Activated CD8-positive, alpha-beta memory T cell treated with anti-CD3 and anti-CD28 coated beads, Interleukin-2, amount 10 ng/mL, durations not matched to agents 7 days and 5 days (primary cell): ENCODE measurements at regions of chr2 and their contacts with region 1.

Region 1: GRCh38 chr2:191811807-191812602 is 34.9 kb downstream of the CAVIN2 start:
- DNase-seq: peak; percentile 47
- ATAC-seq: peak; percentile 47
- H3K4me3 Mint-ChIP-seq: no peak overlapping the region
- H3K27ac Mint-ChIP-seq: no peak overlapping the region
- H3K4me1 Mint-ChIP-seq: no peaks in the 10 kb centered on the region
- H3K27me3 Mint-ChIP-seq: peaks cover 24% of the 10 kb centered on the region

Region 2: DNA sequence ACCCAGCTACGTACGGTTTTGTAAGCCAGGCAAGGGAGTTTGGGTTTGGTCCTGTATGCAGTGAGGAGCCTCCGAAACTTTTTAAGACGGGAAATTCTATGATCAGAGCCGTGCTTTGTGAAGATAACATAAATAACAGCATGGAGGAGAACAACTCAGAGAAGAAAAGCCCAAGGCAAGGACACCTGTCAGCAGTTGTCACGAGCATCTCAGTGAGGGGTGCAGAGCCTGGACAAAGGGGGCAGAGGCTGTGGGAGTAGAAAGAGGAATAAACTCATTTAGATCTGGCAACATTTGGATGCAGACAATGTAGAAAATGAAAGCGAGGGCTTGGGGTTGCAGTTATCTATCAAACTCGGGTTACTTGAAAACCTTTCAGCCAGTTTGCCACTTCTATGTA is 29.7 kb before region 1 on chr2:
- CTCF ChIA-PET with region 1: no interaction called
- DNase-seq: no peak
- ATAC-seq: no peak
- H3K4me3 Mint-ChIP-seq: no peak overlapping the region
- H3K27ac Mint-ChIP-seq: no peak overlapping the region
- H3K4me1 Mint-ChIP-seq: peaks cover 8% of the 10 kb centered on the region
- H3K27me3 Mint-ChIP-seq: peaks cover 17% of the 10 kb centered on the region

Region 3: GRCh38 chr2:191795715-191796114 is 16.3 kb before region 1 on chr2:
- CTCF ChIA-PET with region 1: no interaction called
- DNase-seq: no peak
- ATAC-seq: no peak
- H3K4me3 Mint-ChIP-seq: no peak overlapping the region
- H3K27ac Mint-ChIP-seq: no peak overlapping the region
- H3K4me1 Mint-ChIP-seq: no peaks in the 10 kb centered on the region
- H3K27me3 Mint-ChIP-seq: peaks cover 26% of the 10 kb centered on the region

Region 4: GRCh38 chr2:191831410-191831994 is 19.5 kb after region 1 on chr2:
- CTCF ChIA-PET with region 1: no interaction called
- DNase-seq: no peak
- ATAC-seq: no peak
- H3K4me3 Mint-ChIP-seq: no peak overlapping the region
- H3K27ac Mint-ChIP-seq: no peak overlapping the region
- H3K4me1 Mint-ChIP-seq: no peaks in the 10 kb centered on the region
- H3K27me3 Mint-ChIP-seq: peaks cover 40% of the 10 kb centered on the region

Region 5: DNA sequence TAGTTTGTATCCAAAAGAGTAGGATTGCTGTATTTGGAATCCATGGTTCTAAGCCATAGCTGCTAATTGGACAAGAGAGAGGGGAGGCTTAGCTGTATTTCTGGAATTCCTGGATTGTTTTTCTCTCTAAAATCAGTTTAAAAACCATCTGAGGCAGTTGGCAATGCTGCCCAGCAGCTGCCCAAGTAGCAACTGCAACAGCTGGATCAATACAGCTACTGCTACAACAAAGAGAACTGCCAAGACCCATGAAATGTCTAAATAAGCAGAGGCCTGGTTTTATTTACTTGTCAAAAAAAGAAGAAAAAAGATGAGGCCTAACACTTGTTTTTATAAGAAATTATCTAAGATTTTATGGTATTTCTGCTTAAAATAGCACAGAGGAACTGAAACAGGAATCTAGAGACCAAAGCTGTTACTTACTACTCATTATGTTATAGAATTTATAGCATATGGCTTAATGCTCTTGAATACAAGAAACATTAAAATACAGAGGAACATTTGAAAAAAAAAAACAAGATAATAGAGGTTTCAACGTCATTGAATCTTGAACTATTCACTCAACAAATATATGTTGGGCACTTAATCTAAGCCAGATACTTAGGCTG is 343.6 kb after region 1 on chr2:
- CTCF ChIA-PET with region 1: interaction called, 11 read pairs
- DNase-seq: no peak
- ATAC-seq: no peak
- H3K4me3 Mint-ChIP-seq: no peak overlapping the region
- H3K27ac Mint-ChIP-seq: no peak overlapping the region
- H3K4me1 Mint-ChIP-seq: peaks cover 4% of the 10 kb centered on the region
- H3K27me3 Mint-ChIP-seq: peaks cover 10% of the 10 kb centered on the region